ENCODE measurements at regions of chr2 and their contacts with region 1.

Region 1: DNA sequence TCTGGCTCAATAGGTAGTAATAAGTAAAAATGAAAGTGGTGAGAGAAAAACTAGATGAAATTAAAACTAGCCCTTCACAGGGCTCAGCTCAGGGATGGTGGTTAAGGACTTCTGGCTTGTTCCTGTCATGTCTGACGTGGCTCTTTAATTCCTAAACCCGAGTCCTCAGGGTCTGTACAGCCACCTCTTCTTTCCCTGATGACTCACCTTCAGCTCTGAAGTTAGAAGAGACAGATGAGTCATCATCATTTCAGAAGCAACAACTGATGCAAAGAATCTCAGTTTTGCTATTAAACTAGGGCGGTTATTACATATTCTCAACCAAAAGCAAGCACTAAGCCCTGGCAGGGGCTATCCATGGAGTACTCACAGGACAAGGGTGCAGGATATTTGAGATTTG is 24.0 kb upstream of the ITGB6 start:
- DNase-seq: peak; percentile 84
- ATAC-seq: peak; percentile 85
- H3K4me3 ChIP-seq: peak overlapping the region in 1 of 2 experiments; percentile 13; a peak in 1 of 4 replicates
- H3K27ac ChIP-seq: peak overlapping the region; percentile 44
- H3K4me1 ChIP-seq: peaks cover 50 to 97% of the 10 kb centered on the region in 2 experiments
- H3K27me3 ChIP-seq: no peaks in the 10 kb centered on the region
- CTCF ChIP-seq: no peak
- POLR2A ChIP-seq: no peak
- RAD21 ChIP-seq: peak; percentile 22; the same call in 1 of the 2 replicates

Region 2: GRCh38 chr2:160145471-160145870 is 78.6 kb before region 1 on chr2:
- CTCF ChIA-PET with region 1: no interaction called
- POLR2A ChIA-PET with region 1: no interaction called
- RAD21 ChIA-PET with region 1: no interaction called
- intact Hi-C with region 1: no loop called
- DNase-seq: no peak
- ATAC-seq: no peak
- H3K4me3 ChIP-seq: no peak overlapping the region
- H3K27ac ChIP-seq: no peak overlapping the region
- H3K4me1 ChIP-seq: no peaks in the 10 kb centered on the region
- H3K27me3 ChIP-seq: no peaks in the 10 kb centered on the region
- CTCF ChIP-seq: no peak
- POLR2A ChIP-seq: no peak
- RAD21 ChIP-seq: no peak

Region 3: GRCh38 chr2:160241251-160242137 is 17.4 kb after region 1 on chr2:
- CTCF ChIA-PET with region 1: no interaction called
- POLR2A ChIA-PET with region 1: interaction called, 21 read pairs
- RAD21 ChIA-PET with region 1: no interaction called
- intact Hi-C with region 1: no loop called
- DNase-seq: peak; percentile 56
- ATAC-seq: peak; percentile 81
- H3K4me3 ChIP-seq: 0 out of 4 replicates have a peak overlapping the region, but pooled peaks of 1 of the 2 experiments have one; percentile 25
- H3K27ac ChIP-seq: no peak overlapping the region
- H3K4me1 ChIP-seq: peaks cover 16 to 21% of the 10 kb centered on the region in 2 experiments
- H3K27me3 ChIP-seq: peaks cover 5% of the 10 kb centered on the region; the same call in 1 of the 2 replicates
- CTCF ChIP-seq: no peak
- POLR2A ChIP-seq: no peak
- RAD21 ChIP-seq: no peak